T-cell (primary cell): ENCODE measurements at regions of chr12 and their contacts with region 1.

Region 1: GRCh38 chr12:108745641-108746040 is 14.3 kb upstream of the CORO1C start:
- DNase-seq: no peak
- ATAC-seq: no peak
- H3K4me3 ChIP-seq: no peak overlapping the region
- H3K4me3 Mint-ChIP-seq: no peak overlapping the region
- H3K27ac ChIP-seq: no peak overlapping the region
- H3K27ac Mint-ChIP-seq: no peak overlapping the region
- H3K4me1 ChIP-seq: no peaks in the 10 kb centered on the region
- H3K4me1 Mint-ChIP-seq: no peaks in the 10 kb centered on the region
- H3K27me3 ChIP-seq: no peaks in the 10 kb centered on the region
- H3K27me3 Mint-ChIP-seq: no peaks in the 10 kb centered on the region

Region 2: GRCh38 chr12:108861878-108862587 is 116.4 kb after region 1 on chr12:
- CTCF ChIA-PET with region 1: no interaction called
- POLR2A ChIA-PET with region 1: interaction called in 1 of 2 experiments, 12 read pairs
- DNase-seq: peak in 1 of 35 experiments; percentile 19
- ATAC-seq: no peak
- H3K4me3 ChIP-seq: no peak overlapping the region
- H3K4me3 Mint-ChIP-seq: no peak overlapping the region
- H3K27ac ChIP-seq: no peak overlapping the region
- H3K27ac Mint-ChIP-seq: no peak overlapping the region
- H3K4me1 ChIP-seq: peaks cover 5 to 12% of the 10 kb centered on the region in 2 experiments
- H3K4me1 Mint-ChIP-seq: peaks cover 15 to 31% (median 18%) of the 10 kb centered on the region in 3 donors
- H3K27me3 ChIP-seq: peaks cover 0 to 11% of the 10 kb centered on the region in 2 experiments
- H3K27me3 Mint-ChIP-seq: no peaks in the 10 kb centered on the region